ENCODE measurements at regions of chr22 and their contacts with region 1.

Region 1: GRCh38 chr22:35582861-35583670 is 34.1 kb downstream of the MB start:
- DNase-seq: peak; percentile 71
- ATAC-seq: no peak

Region 2: DNA sequence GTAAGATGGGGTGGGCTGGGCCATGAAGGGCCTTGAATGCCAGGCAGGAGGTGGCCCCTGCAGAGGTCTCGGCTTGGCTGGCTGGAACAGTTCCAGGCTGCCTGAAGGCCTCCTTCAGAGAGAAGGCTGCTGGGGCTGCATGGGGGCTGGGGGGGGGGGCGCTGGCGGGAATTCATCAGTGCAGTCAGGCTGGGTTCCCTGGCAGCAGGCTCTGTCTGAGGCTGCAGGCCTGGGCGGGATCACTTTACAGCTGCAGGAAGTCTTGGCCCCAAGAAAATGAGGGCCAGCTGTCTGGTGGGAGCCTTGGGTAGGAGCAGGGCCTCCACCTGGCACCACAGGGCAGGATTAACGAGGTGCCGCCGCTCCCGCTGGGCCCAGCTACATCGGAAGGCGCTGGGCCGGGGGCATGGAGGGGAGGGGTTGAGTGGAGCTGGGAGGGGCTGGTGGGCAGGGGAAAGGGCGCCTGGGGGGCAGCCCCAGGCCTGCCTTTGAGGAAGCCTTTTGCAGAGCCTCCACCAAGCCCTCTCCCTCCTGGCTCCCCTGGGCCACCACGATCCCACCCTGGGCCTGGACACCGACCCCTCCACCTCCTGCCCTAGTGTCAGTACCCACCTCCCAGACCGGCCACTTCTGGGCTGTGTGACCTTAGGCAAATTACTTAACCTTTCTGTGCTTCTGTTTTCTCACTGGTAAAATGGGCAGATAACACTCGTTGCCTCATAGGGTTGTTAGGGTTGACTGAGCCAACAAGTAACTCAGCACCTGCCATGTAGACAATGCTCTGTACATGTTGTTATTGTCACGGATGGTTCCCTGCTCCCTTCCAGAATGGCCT is 233.1 kb before region 1 on chr22:
- intact Hi-C with region 1: loop called (anchors 5 kb)
- DNase-seq: no peak
- ATAC-seq: no peak

Region 3: DNA sequence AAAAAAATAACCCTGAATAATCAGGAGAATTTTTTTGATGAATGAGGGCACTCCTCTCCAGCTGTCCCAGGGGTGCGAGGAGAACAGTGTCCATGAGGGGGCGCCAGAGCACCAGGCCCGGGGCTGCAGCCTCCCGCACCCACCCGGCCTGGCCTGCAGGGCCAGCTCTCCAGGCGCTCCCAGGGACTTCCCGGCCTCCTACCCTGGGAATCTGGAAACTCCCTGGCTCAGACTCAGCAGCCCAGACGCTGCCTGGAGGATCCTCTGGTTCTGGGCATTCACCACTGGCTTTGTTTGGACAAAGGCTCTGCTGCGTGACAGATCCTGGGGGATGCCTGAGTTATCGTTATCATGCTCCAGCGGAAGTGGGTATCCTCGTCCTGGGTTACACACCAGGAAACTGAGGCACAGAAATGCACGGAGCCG is 152.2 kb before region 1 on chr22:
- intact Hi-C with region 1: loop called (anchors 1 kb)
- DNase-seq: peak; percentile 93
- ATAC-seq: peak; percentile 97

Region 4: GRCh38 chr22:35539910-35540594 is 43.0 kb before region 1 on chr22:
- intact Hi-C with region 1: loop called (anchors 5 kb)
- DNase-seq: peak; percentile 78
- ATAC-seq: peak; percentile 82

Region 5: DNA sequence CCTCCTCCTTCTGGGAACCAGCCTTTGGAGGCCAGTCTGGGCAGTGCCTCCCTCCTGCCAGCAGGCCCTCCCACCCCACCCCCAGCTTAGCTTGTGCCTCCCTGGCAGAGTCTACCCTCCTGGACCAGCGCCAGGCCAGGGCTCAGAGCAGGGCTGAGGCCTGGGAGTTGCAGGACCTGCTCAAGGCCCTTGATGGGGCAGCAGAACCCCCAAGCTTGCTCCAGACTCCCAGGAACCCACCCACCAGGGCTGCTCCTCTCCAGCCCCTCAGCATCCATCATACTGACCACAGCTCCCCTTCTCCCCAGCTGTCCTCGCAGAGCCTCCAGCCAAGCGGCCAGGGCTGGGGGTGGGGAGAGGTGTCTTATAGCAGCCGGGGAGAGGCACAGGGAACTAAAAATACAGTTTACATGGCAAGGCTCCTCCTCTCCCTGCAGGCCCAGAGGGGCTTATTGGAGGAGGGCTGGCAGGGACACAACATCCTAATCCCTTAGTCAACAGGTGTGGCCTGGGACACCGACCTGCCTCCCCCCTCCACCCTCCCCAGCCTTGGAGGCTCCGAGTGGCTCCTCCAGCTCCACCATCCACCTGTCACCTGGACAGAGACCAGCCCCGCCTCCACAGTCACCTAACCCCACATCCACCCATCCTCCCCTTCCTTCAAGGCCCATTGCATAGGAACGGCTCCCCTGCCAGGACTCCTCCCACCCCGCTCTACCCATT is 39.3 kb after region 1 on chr22:
- intact Hi-C with region 1: loop called (anchors 2 kb)
- DNase-seq: peak; percentile 83
- ATAC-seq: peak; percentile 58

Region 6: DNA sequence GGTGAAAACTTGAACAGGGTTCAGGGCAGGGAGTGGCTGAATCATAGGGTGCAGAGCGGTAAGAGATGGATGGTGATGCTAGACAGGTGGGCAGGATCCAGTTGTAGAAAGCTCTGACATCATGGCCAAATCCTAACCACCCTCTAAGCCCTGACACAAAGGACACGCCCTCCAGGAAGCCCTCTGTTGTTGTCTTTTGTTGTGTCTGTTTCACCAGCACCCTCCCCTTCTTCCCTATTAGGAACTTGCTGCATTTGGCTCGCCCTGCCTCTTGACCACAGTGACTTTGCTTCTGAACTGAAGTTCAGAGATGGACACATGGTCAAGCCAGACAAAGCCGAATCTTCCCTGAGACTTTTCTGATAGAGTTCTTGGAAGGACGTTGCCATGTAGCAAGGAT is 50.9 kb after region 1 on chr22:
- intact Hi-C with region 1: no loop called
- DNase-seq: no peak
- ATAC-seq: no peak

Region 7: GRCh38 chr22:36123673-36124630 is 540.9 kb after region 1 on chr22:
- intact Hi-C with region 1: loop called (anchors 5 kb)
- DNase-seq: peak; percentile 97
- ATAC-seq: peak; percentile 96

Measured in Right ventricle myocardium inferior (tissue), 1 donor.